A549 (cell line): ENCODE measurements at regions of chr1 and their contacts with region 1.

Region 1: DNA sequence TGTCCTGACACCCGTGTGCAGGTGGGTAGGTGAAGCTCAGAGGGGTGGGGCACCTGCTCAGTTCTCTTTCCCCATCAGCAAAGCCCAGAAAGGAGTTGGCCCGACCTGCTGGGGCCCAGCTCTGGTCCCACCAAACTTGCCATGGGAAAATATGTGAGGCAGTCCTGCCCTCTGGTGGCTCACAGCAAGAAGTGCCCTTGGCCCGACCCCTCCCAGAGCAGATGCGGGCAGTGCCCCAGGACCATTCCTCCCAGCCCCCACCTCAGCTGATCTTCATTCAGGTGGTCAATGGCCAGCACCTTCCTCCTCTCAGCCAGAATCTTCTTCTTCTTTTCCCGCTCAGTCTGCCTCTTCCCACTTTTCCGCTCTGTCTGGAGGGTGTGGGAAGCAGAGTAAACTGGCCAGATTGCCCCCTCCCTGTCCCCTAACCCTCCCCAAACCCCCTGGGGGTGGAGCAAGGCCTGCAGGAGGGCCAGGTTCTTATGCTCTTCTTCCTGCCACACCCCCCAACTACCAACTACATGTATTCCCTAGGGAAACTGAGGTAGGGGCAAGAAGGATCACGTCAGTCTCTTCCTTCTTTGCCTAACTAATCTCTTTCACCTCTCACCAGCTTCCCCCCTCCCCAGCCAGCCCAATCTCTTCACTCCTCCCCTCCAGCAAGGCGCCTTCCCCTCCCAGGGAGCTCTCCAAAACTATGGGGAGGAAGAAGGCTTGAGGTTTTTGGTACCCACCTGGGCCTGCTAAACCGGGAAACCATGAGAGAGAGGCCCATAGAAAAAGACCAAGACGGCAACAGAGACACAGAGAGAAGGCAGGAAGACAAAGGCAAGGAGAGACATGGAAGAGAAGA is 15.6 kb downstream of the TNNT2 start:
- DNase-seq: peak; percentile 47 to 96
- ATAC-seq: peak; percentile 75 to 91; a peak in 5 of 6 replicates
- H3K4me3 ChIP-seq: no peak overlapping the region
- H3K27ac ChIP-seq: peak overlapping the region in 1 of 2 experiments; percentile 50; a peak in 3 of 6 replicates
- H3K4me1 ChIP-seq: no peaks in the 10 kb centered on the region; the same call in 2 of the 3 replicates
- CTCF ChIP-seq: peak; percentile 91
- EP300 ChIP-seq: no peak
- POLR2A ChIP-seq: no peak
- RAD21 ChIP-seq: peak; percentile 96 to 99

Region 2: DNA sequence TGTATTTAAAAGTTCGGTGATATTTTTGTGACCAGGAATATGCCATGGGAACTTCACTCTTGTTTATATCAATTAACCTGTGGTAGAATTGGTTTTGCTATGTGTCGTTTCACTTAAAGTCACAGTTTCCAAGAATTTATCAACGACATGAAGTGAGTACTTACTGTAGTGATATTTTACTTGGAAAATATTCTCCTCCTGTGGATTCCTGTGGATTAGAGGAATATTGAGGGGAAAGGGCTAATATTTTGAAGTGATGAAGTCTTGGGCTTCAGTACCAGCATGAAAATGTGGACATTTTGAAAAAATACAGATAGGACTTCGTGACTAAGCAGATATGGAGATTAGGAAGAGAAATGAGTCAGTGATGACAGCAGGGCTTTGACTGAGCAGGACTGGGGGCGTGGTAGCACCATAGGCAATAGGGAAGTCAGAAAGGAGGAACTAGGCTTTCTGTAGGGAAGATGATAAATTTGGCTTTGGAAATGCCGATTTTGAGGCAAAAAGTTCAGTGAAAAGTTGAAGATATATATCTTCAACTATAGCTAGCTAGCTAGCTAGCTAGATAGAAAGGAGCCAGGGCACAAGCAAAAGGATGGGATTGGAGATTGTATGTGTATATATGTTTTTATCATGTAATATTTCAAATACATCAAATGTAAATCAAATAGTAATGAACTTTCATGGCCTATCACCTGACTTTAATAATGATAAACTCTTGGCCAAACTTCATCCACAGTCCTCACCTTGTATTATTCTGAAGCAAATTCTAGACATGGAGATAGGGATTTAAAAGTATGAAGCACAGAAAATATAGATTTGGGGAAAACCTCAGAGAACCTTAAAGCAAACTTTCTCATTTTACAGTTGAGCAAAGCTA is 721.8 kb before region 1 on chr1:
- CTCF ChIA-PET with region 1: no interaction called
- POLR2A ChIA-PET with region 1: no interaction called
- DNase-seq: peak; percentile 89 to 93
- ATAC-seq: peak; percentile 99 to 100
- H3K4me3 ChIP-seq: no peak overlapping the region
- H3K27ac ChIP-seq: peak overlapping the region; percentile 89 to 90
- H3K4me1 ChIP-seq: peaks cover 18% of the 10 kb centered on the region
- CTCF ChIP-seq: no peak
- EP300 ChIP-seq: no peak
- POLR2A ChIP-seq: no peak
- RAD21 ChIP-seq: no peak

Region 3: GRCh38 chr1:201149400-201149799 is 212.5 kb before region 1 on chr1:
- CTCF ChIA-PET with region 1: interaction called, 17 read pairs
- POLR2A ChIA-PET with region 1: no interaction called
- DNase-seq: peak; percentile 64 to 85
- ATAC-seq: peak; percentile 54 to 65; a peak in 5 of 6 replicates
- H3K4me3 ChIP-seq: no peak overlapping the region
- H3K27ac ChIP-seq: no peak overlapping the region
- H3K4me1 ChIP-seq: peaks cover 7% of the 10 kb centered on the region
- CTCF ChIP-seq: peak; percentile 78
- EP300 ChIP-seq: no peak
- POLR2A ChIP-seq: no peak
- RAD21 ChIP-seq: peak; percentile 49 to 61

Region 4: DNA sequence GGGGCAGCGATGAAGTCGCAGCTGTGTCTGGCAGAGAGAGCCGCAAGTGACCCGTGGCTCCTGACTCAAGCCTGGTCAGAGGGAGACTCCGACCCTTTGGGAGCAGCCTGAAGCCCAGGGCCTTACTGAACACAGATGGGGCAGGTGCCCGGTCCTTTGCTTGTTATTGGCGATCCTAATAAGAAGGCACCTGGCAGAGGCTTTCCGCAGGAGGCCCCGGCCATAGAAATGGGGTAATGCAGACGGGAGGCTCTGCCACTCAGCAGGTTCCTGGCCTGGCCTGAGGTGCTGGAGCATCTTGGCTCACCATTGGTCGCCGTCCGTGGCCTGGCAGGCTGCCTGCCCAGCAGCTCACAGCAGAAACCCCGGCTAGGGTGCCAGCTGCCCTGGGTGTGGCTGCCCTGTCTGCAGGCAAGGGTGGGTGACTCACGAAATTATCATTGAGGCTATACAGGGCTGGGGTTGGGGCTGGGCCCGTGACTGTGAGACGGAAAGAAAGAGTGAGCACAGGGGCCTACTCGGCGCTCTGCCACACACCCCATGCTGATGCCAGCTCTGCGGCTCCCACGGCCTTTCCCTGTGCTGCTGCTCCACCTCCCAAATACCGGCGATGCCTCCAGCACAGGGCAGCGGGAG is 86.7 kb before region 1 on chr1:
- CTCF ChIA-PET with region 1: interaction called, 10 read pairs
- POLR2A ChIA-PET with region 1: no interaction called
- DNase-seq: peak; percentile 91 to 94
- ATAC-seq: peak; percentile 93 to 95
- H3K4me3 ChIP-seq: no peak overlapping the region
- H3K27ac ChIP-seq: peak overlapping the region; percentile 87
- H3K4me1 ChIP-seq: peaks cover 40% of the 10 kb centered on the region
- CTCF ChIP-seq: no peak
- EP300 ChIP-seq: peak in 1 of 2 experiments; percentile 53; a peak in 1 of 5 replicates
- POLR2A ChIP-seq: no peak
- RAD21 ChIP-seq: peak; percentile 11 to 25; a peak in 1 of 5 replicates

Region 5: DNA sequence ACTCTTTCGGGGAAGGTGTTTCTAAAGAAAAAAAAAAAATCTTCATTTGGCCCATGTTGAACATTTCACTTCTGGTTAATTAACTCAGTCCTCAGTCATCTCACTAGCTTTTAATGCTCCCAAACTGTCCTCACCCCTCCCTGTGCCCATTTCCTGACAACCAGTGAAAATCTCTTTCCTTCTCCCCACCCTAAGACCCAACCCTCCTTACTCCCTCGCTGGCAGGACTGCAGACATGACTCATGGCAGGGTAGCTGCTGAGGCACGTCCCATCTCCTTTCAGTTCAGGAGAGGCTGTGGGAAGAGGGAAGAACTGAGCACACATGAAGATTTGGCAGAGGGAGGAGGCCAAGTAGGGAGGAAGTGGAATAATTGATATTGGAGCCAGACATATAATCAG is 66.0 kb before region 1 on chr1:
- CTCF ChIA-PET with region 1: interaction called, 16 read pairs
- POLR2A ChIA-PET with region 1: no interaction called
- DNase-seq: peak; percentile 48 to 64
- ATAC-seq: peak; percentile 48 to 76; a peak in 3 of 6 replicates
- H3K4me3 ChIP-seq: no peak overlapping the region
- H3K27ac ChIP-seq: peak overlapping the region; percentile 30 to 73
- H3K4me1 ChIP-seq: peaks cover 39% of the 10 kb centered on the region
- CTCF ChIP-seq: no peak
- EP300 ChIP-seq: no peak
- POLR2A ChIP-seq: no peak; the same call in 1 of the 2 replicates
- RAD21 ChIP-seq: no peak

Region 6: GRCh38 chr1:201348211-201348566 is 13.7 kb before region 1 on chr1:
- CTCF ChIA-PET with region 1: interaction called, 196 read pairs
- POLR2A ChIA-PET with region 1: no interaction called
- DNase-seq: peak; percentile 64 to 92
- ATAC-seq: peak; percentile 86 to 95
- H3K4me3 ChIP-seq: no peak overlapping the region
- H3K27ac ChIP-seq: no peak overlapping the region
- H3K4me1 ChIP-seq: 0 out of 3 replicates have a peak, but pooled peaks cover 5% of the 10 kb centered on the region
- CTCF ChIP-seq: peak; percentile 67
- EP300 ChIP-seq: no peak
- POLR2A ChIP-seq: no peak
- RAD21 ChIP-seq: peak; percentile 69 to 71

Region 7: DNA sequence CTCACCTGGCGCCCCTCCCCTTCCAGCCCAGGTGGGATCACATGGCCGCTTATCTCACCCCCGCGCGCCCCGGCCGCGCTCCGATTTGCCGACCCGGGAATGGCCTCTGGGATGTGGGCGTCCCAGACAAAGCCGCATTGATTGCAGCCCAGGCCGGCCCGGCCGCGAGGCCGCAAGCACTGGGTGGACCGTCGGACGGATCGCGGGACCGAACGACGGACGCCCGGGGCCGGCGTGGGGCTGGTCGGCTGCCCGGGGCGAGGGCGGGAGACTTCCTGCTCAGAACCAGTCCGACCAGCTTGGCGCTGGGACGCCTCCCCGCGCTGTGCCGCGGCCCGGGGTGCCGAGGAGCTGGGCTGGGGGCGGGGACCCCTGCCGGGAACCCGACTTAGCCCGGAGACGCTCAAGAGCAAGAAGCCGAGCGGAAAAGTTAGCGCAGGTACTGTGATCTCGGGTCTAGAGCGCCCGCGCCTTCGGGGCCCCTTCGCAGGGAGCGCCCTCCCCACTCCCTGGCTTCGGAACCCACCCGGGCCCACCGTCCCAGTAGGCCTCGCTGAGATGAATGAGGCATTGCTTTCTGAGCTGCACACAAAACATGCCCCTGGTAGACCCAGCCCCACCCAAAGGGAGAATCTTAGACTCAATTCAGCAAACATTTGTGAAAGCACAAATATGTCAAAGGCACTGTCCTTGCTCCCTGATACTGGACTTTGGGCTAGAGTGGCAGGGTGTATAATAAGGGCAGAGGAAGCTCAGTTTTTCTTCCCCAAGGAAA is 37.7 kb after region 1 on chr1:
- CTCF ChIA-PET with region 1: interaction called, 16 read pairs
- POLR2A ChIA-PET with region 1: no interaction called
- DNase-seq: no peak
- ATAC-seq: no peak
- H3K4me3 ChIP-seq: no peak overlapping the region
- H3K27ac ChIP-seq: peak overlapping the region; percentile 90 to 92
- H3K4me1 ChIP-seq: peaks cover 75% of the 10 kb centered on the region
- CTCF ChIP-seq: no peak
- EP300 ChIP-seq: no peak
- POLR2A ChIP-seq: no peak
- RAD21 ChIP-seq: no peak